ENCODE measurements at regions of chr18 and their contacts with region 1.

Region 1: GRCh38 chr18:70582981-70583380 is 294.1 kb downstream of the SOCS6 start:
- DNase-seq: no peak
- ATAC-seq: no peak
- H3K4me3 ChIP-seq: no peak overlapping the region
- H3K27ac ChIP-seq: no peak overlapping the region
- H3K4me1 ChIP-seq: no peaks in the 10 kb centered on the region
- H3K27me3 ChIP-seq: no peaks in the 10 kb centered on the region
- CTCF ChIP-seq: no peak

Region 2: DNA sequence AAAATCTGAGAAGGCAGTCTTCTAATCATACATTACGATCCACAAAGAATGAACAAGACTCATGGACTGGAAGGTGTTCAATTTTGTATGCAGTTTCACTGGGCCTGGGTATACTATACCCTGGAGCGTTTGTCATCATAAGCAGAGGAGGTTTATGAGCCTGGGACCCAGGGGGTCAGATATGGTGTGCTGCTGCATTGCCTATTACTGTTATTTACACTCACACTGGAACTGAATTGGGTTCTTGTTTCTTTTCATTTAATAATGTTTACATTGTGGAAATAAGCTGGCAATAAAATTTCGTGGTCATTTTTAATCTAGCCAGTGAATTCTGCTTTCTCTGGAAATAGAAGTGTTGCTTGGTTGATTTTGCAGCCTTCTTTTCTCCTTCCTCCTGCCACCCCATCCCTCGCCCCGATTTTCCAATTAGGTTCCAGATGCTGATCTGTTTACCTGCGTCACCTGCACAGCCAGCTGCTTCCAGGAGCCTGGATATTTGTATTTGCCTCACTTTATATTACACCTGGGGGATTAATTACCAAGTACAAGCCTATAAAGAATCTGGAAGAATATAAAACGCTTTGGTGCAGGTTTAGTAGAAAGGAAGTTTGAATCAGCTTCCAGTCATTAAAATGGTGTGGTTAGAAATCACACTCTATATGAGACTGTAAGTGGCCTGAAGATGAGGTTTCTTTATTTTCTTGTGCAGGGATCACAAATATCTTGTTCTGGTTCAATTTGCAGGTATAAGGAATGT is 59.8 kb before region 1 on chr18:
- intact Hi-C with region 1: no loop called
- DNase-seq: no peak
- ATAC-seq: no peak
- H3K4me3 ChIP-seq: no peak overlapping the region
- H3K27ac ChIP-seq: no peak overlapping the region
- H3K4me1 ChIP-seq: no peaks in the 10 kb centered on the region
- H3K27me3 ChIP-seq: no peaks in the 10 kb centered on the region
- CTCF ChIP-seq: no peak

Region 3: GRCh38 chr18:70645971-70646370 is 63.0 kb after region 1 on chr18:
- intact Hi-C with region 1: loop called in 1 of 3 experiments (anchors 10 kb)
- DNase-seq: no peak
- ATAC-seq: no peak
- H3K4me3 ChIP-seq: no peak overlapping the region
- H3K27ac ChIP-seq: no peak overlapping the region
- H3K4me1 ChIP-seq: no peaks in the 10 kb centered on the region
- H3K27me3 ChIP-seq: no peaks in the 10 kb centered on the region
- CTCF ChIP-seq: no peak